Activated CD8-positive, alpha-beta T cell treated with anti-CD3 and anti-CD28 coated beads for 36 hours (primary cell): ENCODE measurements at regions of chr6 and their contacts with region 1.

Region 1: GRCh38 chr6:151390276-151391032 is 905 bp downstream of the ZBTB2 start:
- DNase-seq: peak; percentile 98
- ATAC-seq: peak; percentile 81
- H3K4me3 Mint-ChIP-seq: peak overlapping the region; percentile 94
- H3K27ac Mint-ChIP-seq: peak overlapping the region; percentile 66
- H3K4me1 Mint-ChIP-seq: peaks cover 53% of the 10 kb centered on the region
- H3K27me3 Mint-ChIP-seq: no peaks in the 10 kb centered on the region
- CTCF ChIP-seq: no peak

Region 2: DNA sequence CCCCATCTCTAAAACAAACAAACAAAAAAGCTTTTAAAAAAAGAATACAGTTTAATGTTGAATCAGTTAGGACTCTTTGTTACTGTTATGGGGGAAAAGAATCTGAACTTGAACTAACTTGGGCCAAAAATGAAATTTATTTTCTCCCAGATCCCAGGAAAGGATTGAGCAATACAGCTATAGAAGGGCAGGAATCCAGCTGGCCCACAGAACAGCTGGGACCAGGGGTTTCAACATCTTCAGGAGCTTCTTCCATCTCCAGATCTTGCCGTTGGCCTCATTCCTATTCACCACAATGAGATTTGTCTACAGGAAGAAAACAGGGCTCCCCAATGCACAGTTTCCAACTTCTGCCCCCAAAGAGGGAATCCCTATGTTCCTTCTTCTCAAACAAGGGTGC is 193.9 kb before region 1 on chr6:
- CTCF ChIA-PET with region 1: no interaction called
- POLR2A ChIA-PET with region 1: no interaction called
- intact Hi-C with region 1: no loop called
- DNase-seq: no peak
- ATAC-seq: no peak
- H3K4me3 Mint-ChIP-seq: no peak overlapping the region
- H3K27ac Mint-ChIP-seq: no peak overlapping the region
- H3K4me1 Mint-ChIP-seq: no peaks in the 10 kb centered on the region
- H3K27me3 Mint-ChIP-seq: peaks cover 1% of the 10 kb centered on the region
- CTCF ChIP-seq: no peak

Region 3: GRCh38 chr6:151374036-151374683 is 16.3 kb before region 1 on chr6:
- CTCF ChIA-PET with region 1: interaction called, 7 read pairs
- POLR2A ChIA-PET with region 1: interaction called, 81 read pairs
- intact Hi-C with region 1: loop called (anchors 2 kb)
- DNase-seq: peak; percentile 35
- ATAC-seq: peak; percentile 28
- H3K4me3 Mint-ChIP-seq: peak overlapping the region; percentile 64
- H3K27ac Mint-ChIP-seq: peak overlapping the region; percentile 87
- H3K4me1 Mint-ChIP-seq: peaks cover 66% of the 10 kb centered on the region
- H3K27me3 Mint-ChIP-seq: no peaks in the 10 kb centered on the region
- CTCF ChIP-seq: no peak

Region 4: DNA sequence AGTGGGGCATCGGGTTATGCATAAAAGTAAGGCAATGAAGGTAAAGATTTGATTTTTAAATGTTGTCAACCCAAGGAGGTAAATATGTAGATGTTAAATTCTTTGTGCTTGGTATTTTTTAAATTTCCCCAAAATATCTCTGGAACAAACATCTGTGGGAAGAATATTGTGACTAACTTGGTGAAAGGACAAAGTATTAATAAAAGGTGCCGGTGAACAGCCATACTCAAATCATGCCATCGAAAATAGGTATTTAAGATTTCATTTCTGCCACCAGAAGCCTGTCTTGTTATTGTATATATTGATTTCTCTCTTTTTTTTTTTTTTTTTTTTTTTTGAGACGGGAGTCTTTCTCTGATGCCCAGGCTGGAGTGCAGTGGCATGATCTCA is 13.5 kb after region 1 on chr6:
- CTCF ChIA-PET with region 1: interaction called, 40 read pairs
- POLR2A ChIA-PET with region 1: interaction called, 7 read pairs
- intact Hi-C with region 1: no loop called
- DNase-seq: no peak
- ATAC-seq: no peak
- H3K4me3 Mint-ChIP-seq: no peak overlapping the region
- H3K27ac Mint-ChIP-seq: peak overlapping the region; percentile 7
- H3K4me1 Mint-ChIP-seq: peaks cover 37% of the 10 kb centered on the region
- H3K27me3 Mint-ChIP-seq: no peaks in the 10 kb centered on the region
- CTCF ChIP-seq: no peak

Region 5: DNA sequence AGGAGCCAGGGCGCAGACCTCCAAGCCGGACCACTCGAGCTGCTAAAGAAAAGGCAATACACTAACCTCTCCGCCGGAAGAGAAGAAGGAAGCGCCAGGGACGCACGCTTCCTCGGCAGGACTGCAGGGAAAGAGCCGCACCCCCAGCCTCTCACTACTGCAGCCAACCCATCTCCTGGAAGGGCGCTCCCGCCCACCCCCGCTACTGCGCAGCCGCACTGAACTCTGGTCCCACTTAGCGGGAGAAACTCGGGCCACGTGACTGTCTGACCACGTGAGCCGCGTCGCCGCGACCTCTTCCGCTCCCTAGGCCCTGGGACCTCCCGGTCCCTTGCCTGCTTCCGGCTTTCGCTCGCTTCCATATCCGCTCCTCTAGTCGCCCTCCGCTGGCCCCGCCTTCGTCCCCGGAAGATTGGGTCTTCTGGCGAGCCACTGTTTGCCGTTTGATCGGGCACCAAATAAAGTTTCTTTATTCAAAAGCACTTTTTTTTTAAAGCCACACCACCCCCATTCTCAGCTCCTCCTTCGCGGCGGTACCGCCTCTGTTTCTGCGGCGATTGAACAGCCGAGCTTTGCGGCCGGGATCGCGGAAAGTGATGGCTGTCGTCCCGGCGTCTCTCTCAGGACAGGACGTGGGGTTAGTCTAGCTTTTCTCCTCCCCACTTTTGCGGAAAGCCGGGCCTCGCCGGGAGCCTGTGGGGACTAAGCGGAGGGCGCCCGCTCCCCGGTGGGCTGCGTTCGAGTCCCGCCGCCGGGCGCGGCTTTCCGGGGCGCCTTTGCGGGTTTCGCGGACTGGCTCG is 61.7 kb after region 1 on chr6 and contains the start of gene RMND1:
- CTCF ChIA-PET with region 1: interaction called, 7 read pairs
- POLR2A ChIA-PET with region 1: interaction called, 6 read pairs
- intact Hi-C with region 1: loop called (anchors 5 kb)
- DNase-seq: peak; percentile 100
- ATAC-seq: peak; percentile 98
- H3K4me3 Mint-ChIP-seq: peak within 1 kb of the TSS; percentile 93
- H3K27ac Mint-ChIP-seq: peak within 1 kb of the TSS; percentile 85
- H3K4me1 Mint-ChIP-seq: peaks cover 31% of the 10 kb centered on the region
- H3K27me3 Mint-ChIP-seq: no peaks in the 10 kb centered on the region
- CTCF ChIP-seq: no peak
- total RNA-seq, gene RMND1: 19.0 to 19.7 TPM

Region 6: GRCh38 chr6:151464702-151465101 is 74.2 kb after region 1 on chr6:
- CTCF ChIA-PET with region 1: no interaction called
- POLR2A ChIA-PET with region 1: no interaction called
- intact Hi-C with region 1: no loop called
- DNase-seq: no peak
- ATAC-seq: no peak
- H3K4me3 Mint-ChIP-seq: no peak overlapping the region
- H3K27ac Mint-ChIP-seq: no peak overlapping the region
- H3K4me1 Mint-ChIP-seq: peaks cover 9% of the 10 kb centered on the region
- H3K27me3 Mint-ChIP-seq: no peaks in the 10 kb centered on the region
- CTCF ChIP-seq: no peak